ENCODE measurements at regions of chr6 and their contacts with region 1.

Region 1: GRCh38 chr6:143427109-143427817 is 23.2 kb downstream of the ADAT2 start:
- DNase-seq: peak; percentile 59 to 84 (median 75)
- H3K4me3 ChIP-seq: no peak overlapping the region
- H3K27ac ChIP-seq: no peak overlapping the region
- H3K27me3 ChIP-seq: no peaks in the 10 kb centered on the region
- CTCF ChIP-seq: peak; percentile 56 to 97 (median 90)

Region 2: DNA sequence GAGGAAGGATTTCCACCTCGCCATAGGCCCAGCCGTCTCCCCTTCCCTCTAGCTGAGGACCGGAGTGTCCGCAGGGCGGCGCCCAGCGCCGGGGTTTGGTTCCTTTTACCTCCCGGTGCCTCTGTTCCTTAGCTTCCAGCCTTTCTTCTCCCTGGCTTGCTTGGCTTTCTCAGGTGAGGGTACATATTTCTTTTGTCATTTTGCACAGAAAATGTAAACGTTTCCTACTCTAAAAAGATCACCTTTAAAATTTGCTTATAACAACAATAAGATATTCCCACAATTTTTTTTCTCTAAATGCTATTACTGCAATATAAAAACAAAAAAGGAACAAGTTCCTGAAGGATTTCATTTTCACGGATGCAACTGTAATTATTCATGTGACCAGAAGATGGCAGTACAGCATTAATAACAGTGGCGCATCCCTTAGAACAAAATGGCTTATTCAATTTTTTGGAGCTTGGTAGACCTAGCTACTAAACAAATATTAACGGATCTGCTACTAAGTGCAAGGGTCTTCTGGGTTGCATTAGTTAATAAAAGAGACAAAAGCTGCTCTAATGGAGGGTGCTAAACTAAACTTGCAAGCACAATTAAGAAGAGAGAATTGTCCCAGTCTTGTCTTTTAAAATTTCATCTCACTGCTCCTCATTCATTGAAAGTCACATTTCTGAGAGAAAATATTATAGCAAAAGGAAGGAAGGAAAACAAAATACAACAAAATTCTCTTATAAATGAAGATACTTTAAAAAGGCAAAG is 952.6 kb before region 1 on chr6:
- intact Hi-C with region 1: loop called (anchors 5 to 10 kb)
- DNase-seq: peak; percentile 14 to 71 (median 58)
- H3K4me3 ChIP-seq: peak overlapping the region in 1 of 59 donors; percentile 21
- H3K27ac ChIP-seq: peak overlapping the region in 4 of 59 donors; percentile 15 to 40 (median 24)
- H3K27me3 ChIP-seq: no peaks in the 10 kb centered on the region
- CTCF ChIP-seq: peak; percentile 70 to 95 (median 86)

Region 3: GRCh38 chr6:142566628-142567396 is 860.5 kb before region 1 on chr6:
- intact Hi-C with region 1: loop called in 1 of 2 experiments (anchors 5 kb)
- DNase-seq: no peak
- H3K4me3 ChIP-seq: no peak overlapping the region
- H3K27ac ChIP-seq: no peak overlapping the region
- H3K27me3 ChIP-seq: no peaks in the 10 kb centered on the region
- CTCF ChIP-seq: peak; percentile 38 to 80 (median 70)

Region 4: DNA sequence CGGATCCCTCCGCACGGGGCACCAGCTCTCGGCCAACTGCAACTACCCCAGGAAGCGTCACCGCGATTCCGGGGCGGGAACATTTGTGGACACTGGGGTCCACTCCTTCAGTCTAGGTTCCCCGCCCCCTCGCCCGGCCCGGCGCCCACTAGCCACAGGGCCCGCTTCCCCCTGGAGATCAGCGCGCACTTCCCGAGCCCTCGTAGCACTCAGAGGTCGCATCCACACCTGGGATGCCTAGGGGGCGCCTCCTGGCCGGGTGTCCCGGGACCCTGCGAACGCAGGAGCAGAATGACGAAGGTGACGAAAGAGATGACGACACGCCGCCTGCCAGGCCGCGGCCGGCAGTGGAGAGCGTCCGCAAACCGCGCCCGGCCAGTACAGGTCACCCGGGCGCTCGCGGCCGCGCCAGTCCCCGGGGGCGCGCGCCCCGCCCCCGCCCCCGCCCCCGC is 366.9 kb before region 1 on chr6:
- intact Hi-C with region 1: loop called in 1 of 2 experiments (anchors 10 kb)
- DNase-seq: peak; percentile 60 to 87 (median 76)
- H3K4me3 ChIP-seq: peak overlapping the region; percentile 61 to 99 (median 89)
- H3K27ac ChIP-seq: peak overlapping the region; percentile 81 to 98 (median 92)
- H3K27me3 ChIP-seq: no peaks in the 10 kb centered on the region
- CTCF ChIP-seq: peak in 25 of 56 donors; percentile 7 to 41 (median 21)

Region 5: GRCh38 chr6:143325379-143326140 is 101.7 kb before region 1 on chr6:
- intact Hi-C with region 1: no loop called
- DNase-seq: no peak
- H3K4me3 ChIP-seq: no peak overlapping the region
- H3K27ac ChIP-seq: no peak overlapping the region
- H3K27me3 ChIP-seq: no peaks in the 10 kb centered on the region
- CTCF ChIP-seq: no peak

Region 6: GRCh38 chr6:143346004-143346403 is 81.3 kb before region 1 on chr6:
- intact Hi-C with region 1: no loop called
- DNase-seq: no peak
- H3K4me3 ChIP-seq: no peak overlapping the region
- H3K27ac ChIP-seq: no peak overlapping the region
- H3K27me3 ChIP-seq: no peaks in the 10 kb centered on the region
- CTCF ChIP-seq: no peak